Psoas muscle (tissue), 8 donors: ENCODE measurements at regions of chr4 and their contacts with region 1.

Region 1: GRCh38 chr4:3465698-3466671 is 2.9 kb downstream of the DOK7 start:
- DNase-seq: peak; percentile 49 to 76
- ATAC-seq: peak; percentile 32 to 69 (median 44)
- H3K4me3 ChIP-seq: peak overlapping the region; percentile 32
- H3K27ac ChIP-seq: peak overlapping the region; percentile 91
- H3K4me1 ChIP-seq: peaks cover 45% of the 10 kb centered on the region
- H3K27me3 ChIP-seq: no peaks in the 10 kb centered on the region
- CTCF ChIP-seq: peak; percentile 40

Region 2: GRCh38 chr4:3062471-3062870 is 403.5 kb before region 1 on chr4:
- intact Hi-C with region 1: no loop called
- DNase-seq: no peak
- ATAC-seq: no peak
- H3K4me3 ChIP-seq: no peak overlapping the region
- H3K27ac ChIP-seq: no peak overlapping the region
- H3K4me1 ChIP-seq: peaks cover 12% of the 10 kb centered on the region
- H3K27me3 ChIP-seq: no peaks in the 10 kb centered on the region
- CTCF ChIP-seq: no peak

Region 3: DNA sequence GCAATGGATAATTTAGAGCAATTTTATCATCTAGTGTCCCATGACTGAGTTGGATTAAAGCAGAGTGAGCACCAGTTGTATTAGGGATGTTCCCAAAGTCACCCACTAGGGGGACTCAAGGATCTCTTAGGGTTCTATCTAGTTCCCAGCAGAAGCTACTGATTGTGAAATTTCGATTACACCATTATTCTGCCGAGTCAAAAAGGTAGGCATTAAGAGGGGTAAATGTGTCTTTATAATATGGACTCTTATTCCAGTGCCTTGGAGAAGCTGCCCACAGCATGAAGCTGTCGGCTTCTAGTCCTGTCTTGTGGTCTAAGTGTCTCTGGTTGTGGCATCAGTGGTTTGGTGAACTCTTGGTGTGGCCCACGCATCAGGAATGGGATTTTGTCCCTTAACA is 119.8 kb before region 1 on chr4:
- intact Hi-C with region 1: loop called in 1 of 2 experiments (anchors 5 kb)
- DNase-seq: no peak
- ATAC-seq: peak; percentile 93 to 97 (median 94)
- H3K4me3 ChIP-seq: no peak overlapping the region
- H3K27ac ChIP-seq: no peak overlapping the region
- H3K4me1 ChIP-seq: peaks cover 6% of the 10 kb centered on the region
- H3K27me3 ChIP-seq: no peaks in the 10 kb centered on the region
- CTCF ChIP-seq: peak; percentile 93

Region 4: GRCh38 chr4:3418029-3418762 is 47.8 kb before region 1 on chr4:
- intact Hi-C with region 1: loop called in 1 of 2 experiments (anchors 5 kb)
- DNase-seq: peak in 1 of 2 donors; percentile 70
- ATAC-seq: peak; percentile 69 to 87 (median 82)
- H3K4me3 ChIP-seq: no peak overlapping the region
- H3K27ac ChIP-seq: peak overlapping the region; percentile 30
- H3K4me1 ChIP-seq: no peaks in the 10 kb centered on the region
- H3K27me3 ChIP-seq: no peaks in the 10 kb centered on the region
- CTCF ChIP-seq: peak; percentile 28